Heart left ventricle (tissue), 16 donors: ENCODE measurements at regions of chr10 and their contacts with region 1.

Region 1: DNA sequence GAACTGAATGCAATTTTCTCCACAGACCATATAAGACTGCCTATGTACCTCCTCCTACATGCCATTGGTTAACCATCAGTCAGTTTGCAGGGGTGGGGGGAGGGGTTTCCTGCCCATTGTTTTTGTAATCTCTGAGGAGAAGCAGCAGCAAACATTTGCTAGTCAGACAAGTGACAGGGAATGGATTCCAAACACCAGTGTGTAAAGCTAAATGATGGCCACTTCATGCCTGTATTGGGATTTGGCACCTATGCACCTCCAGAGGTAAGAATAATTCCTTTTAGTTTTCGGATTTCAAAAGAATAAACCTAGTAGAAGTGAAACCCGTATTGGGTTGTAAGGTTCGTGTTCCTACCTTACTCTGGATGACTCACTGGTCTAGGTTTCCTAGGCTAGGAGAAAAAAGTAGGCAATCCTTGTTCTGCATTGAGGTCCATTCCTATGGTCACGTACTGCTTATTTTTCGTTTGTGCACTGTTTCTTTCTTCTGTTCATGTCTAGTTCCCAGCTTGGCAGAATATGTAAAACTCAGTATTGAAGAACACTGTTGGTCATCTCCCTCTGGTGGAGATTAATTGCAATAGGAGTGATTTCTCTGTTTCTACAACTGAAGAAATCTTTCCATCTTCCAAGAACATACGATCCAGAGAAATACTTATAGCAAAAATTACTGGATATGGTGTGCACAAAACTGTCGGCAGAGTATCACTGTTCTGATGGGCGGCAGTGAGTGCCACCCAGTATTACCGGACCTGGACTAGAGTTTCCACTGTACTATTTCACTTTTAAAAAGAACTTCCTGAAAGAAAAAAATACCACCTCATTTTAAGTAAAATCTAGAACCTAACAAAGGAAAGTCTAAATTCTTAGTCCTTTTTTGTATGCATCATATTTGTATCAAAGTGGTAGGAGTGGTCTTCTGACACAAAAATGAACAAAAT is at the start of gene AKR1C3:
- DNase-seq: peak in 1 of 5 donors; percentile 24
- ATAC-seq: peak; percentile 68 to 89 (median 83)
- H3K4me3 ChIP-seq: peak within 1 kb of the TSS; percentile 35 to 68 (median 62)
- H3K27ac ChIP-seq: peak within 1 kb of the TSS in 11 of 12 donors; percentile 49 to 85 (median 70)
- H3K4me1 ChIP-seq: peaks cover 0 to 14% (median 2%) of the 10 kb centered on the region in 12 donors
- H3K27me3 ChIP-seq: no peaks in the 10 kb centered on the region
- CTCF ChIP-seq: peak; percentile 54 to 81 (median 74)
- POLR2A ChIP-seq: peak in 1 of 2 donors; percentile 40
- total RNA-seq, gene AKR1C3: 13.9 to 25.1 (median 21.1) TPM

Region 2: DNA sequence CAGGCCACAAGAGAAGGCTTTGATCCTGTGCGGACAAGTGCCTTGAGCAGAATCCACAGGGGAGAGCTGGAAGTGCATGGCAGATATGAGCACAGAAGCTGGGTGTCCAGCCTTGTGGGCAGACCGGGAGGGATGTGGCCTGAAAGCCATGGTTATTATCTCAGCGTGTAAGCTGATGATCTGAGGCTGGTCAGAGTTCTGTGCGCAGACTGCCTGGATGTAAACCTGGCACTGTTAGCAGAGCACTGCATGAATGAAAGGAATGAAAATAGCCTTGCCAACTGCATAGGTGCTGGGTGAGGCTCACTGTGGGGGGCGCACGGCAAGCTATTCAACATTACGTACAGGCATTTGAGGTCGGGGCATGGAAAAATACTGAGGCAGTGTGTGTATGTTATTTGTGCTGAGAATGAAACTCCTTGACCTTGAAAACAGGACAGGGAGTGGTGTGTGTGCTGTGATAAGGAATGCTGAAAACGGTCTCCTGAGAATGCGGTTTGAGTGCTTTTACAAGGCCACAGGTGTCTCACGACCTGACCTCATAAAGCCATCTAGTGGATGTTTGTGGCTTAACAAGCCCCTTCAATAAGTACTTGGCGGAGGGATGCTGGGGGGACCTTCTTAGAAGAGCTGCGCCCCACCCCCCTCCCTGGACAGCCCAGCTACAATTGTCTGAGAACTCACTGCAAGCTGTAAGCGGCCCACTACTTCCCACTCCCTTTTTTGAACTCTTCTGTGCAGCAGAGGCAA is 112.6 kb before region 1 on chr10:
- intact Hi-C with region 1: loop called in 1 of 10 experiments (anchors 10 kb)
- DNase-seq: peak in 2 of 5 donors; percentile 17 to 31
- ATAC-seq: peak in 3 of 4 donors; percentile 52 to 68 (median 53)
- H3K4me3 ChIP-seq: no peak overlapping the region
- H3K27ac ChIP-seq: peak overlapping the region in 5 of 12 donors; percentile 7 to 52 (median 50)
- H3K4me1 ChIP-seq: peaks cover 0 to 18% (median 6%) of the 10 kb centered on the region in 12 donors
- H3K27me3 ChIP-seq: no peaks in the 10 kb centered on the region
- CTCF ChIP-seq: peak; percentile 21 to 58 (median 51)
- POLR2A ChIP-seq: no peak

Region 3: DNA sequence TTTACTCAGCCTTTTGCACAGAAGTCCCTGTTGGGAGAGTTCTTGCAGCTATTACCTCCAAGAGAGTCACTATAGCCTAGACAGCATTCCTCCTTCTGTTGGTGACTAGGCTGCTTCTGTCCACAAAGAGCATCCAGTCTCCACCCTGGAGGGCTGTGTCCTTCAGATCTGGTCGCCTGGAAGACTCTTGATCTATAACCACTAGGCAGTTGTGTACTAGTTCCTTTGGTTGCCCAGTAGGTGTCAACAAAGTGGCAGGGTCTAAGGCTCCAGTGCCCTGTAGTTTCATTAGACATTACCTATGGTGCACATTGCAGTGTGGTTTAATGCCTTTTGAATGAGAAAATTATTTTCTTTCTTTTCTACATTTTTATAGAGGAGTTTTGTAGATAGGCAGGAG is 79.6 kb before region 1 on chr10:
- intact Hi-C with region 1: loop called in 6 of 10 experiments (anchors 5 to 10 kb)
- DNase-seq: no peak
- ATAC-seq: no peak
- H3K4me3 ChIP-seq: no peak overlapping the region
- H3K27ac ChIP-seq: no peak overlapping the region
- H3K4me1 ChIP-seq: peaks cover 0 to 28% (median 13%) of the 10 kb centered on the region in 12 donors
- H3K27me3 ChIP-seq: no peaks in the 10 kb centered on the region
- CTCF ChIP-seq: peak in 2 of 12 donors; percentile 6 to 11
- POLR2A ChIP-seq: no peak

Region 4: DNA sequence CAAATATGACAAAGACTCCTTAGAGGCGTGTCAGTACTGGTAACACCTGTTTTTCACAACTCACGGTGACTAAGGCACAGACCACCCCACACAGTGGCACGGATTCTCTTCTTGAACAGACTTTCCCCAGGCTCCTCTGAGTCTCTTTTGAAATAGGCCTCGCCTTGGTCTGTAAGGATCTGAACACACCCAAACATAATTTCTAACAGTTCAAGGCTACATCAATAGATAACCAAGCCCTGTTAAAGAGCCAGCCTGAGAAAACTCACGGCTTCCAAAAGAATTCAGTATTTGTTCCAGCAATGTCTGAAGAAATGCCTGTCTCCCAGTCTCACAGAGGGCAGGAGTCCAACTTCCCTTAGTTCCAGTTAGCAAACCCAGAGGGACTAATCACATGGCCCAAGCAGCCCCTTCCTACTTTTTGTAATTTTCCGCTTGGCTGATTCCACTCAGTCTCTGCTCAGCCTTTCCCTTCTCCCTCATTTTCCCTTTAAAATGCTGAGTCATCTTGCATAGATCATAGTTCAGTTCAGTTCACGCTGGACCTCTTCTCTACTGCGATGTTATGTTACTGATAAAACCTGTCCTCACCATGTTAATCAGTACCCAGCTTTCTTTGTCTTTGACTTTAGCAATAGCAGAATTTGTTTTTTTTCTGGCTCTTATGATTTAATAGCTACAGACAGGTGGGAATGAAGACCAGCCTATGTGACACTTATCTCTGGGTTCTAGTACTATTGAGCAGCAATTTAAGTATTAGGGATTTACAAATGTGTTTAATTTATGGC is 22.9 kb before region 1 on chr10:
- intact Hi-C with region 1: loop called in 1 of 10 experiments (anchors 1 kb)
- DNase-seq: peak in 4 of 5 donors; percentile 64 to 87 (median 80)
- ATAC-seq: peak; percentile 91 to 97 (median 94)
- H3K4me3 ChIP-seq: peak overlapping the region in 4 of 12 donors; percentile 6 to 36 (median 18)
- H3K27ac ChIP-seq: peak overlapping the region; percentile 76 to 91 (median 86)
- H3K4me1 ChIP-seq: peaks cover 0 to 36% (median 20%) of the 10 kb centered on the region in 12 donors
- H3K27me3 ChIP-seq: no peaks in the 10 kb centered on the region
- CTCF ChIP-seq: no peak
- POLR2A ChIP-seq: peak in 1 of 2 donors; percentile 41

Region 5: DNA sequence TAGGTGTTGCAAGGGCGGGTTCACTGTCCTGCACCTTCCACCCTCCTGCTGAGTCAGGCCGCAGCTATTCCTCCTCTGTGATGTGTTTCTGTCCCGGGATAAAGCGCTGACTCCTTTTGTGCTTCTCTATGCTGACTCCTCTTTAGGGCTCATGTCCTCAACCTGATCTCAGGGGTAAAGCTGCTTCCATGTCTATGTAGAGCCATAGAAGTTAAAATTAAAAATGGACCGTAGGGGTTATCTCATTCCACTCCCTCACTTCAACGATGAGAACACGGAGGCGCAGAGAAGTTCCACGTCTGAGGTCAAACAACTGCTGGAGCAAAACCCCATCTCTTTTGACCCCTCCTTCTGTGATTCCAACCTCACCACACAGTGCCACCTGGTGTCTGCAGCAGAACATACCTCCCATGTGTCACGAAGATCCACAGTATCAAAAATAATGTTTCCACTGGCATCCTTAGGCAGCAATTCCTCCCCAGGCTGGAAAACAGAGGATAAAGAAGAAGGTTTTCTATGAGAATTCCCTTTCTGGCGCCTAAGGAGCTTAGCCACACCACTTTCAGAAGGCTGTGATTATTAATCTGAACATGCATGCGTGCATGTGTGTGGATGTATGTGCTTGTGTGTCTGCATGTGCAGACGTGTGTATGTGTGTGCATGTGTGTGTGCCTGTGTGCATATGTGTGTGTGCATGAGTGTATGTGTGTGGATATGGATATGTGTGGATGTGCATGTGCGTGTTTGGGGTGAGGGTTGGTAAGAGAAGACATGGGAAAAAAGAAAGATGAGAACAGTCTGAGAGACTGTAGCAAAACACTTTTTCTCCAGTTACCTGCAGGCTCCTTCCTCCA is 189.0 kb after region 1 on chr10:
- intact Hi-C with region 1: loop called in 4 of 10 experiments (anchors 2 to 10 kb)
- DNase-seq: peak in 4 of 5 donors; percentile 44 to 63 (median 58)
- ATAC-seq: peak in 3 of 4 donors; percentile 88 to 95 (median 94)
- H3K4me3 ChIP-seq: no peak overlapping the region
- H3K27ac ChIP-seq: peak overlapping the region in 1 of 12 donors; percentile 63
- H3K4me1 ChIP-seq: peaks cover 0 to 22% (median 0%) of the 10 kb centered on the region in 12 donors
- H3K27me3 ChIP-seq: peaks cover 0 to 4% (median 0%) of the 10 kb centered on the region in 9 donors
- CTCF ChIP-seq: peak; percentile 54 to 76 (median 62)
- POLR2A ChIP-seq: no peak

Region 6: GRCh38 chr10:5293691-5294550 is 199.4 kb after region 1 on chr10:
- intact Hi-C with region 1: loop called in 4 of 10 experiments (anchors 10 kb)
- DNase-seq: peak; percentile 34 to 84 (median 42)
- ATAC-seq: peak in 3 of 4 donors; percentile 3 to 47 (median 14)
- H3K4me3 ChIP-seq: peak overlapping the region in 1 of 12 donors; percentile 19
- H3K27ac ChIP-seq: peak overlapping the region in 10 of 12 donors; percentile 18 to 85 (median 58)
- H3K4me1 ChIP-seq: peaks cover 0 to 69% (median 20%) of the 10 kb centered on the region in 12 donors
- H3K27me3 ChIP-seq: no peaks in the 10 kb centered on the region
- CTCF ChIP-seq: peak in 10 of 12 donors; percentile 20 to 51 (median 34)
- POLR2A ChIP-seq: no peak

Region 7: DNA sequence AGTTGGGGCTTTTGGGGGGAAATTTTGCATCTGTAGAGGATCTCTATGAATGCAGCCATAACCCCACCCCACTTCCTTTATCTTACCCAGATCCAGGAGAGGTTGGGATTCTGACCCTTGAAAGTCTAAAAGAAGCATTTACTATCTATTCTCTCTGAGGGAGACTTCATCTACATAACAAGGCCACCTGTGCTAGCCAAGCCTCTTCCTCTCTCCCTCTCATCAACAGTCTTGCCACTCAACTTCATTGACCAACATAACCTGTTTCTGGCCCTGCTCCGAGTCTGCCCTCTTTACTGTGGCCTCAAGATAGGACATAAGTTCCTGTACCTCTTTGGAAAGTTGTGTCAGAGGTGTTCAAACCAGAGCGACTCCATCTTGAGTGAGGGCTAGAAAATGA is 290.7 kb after region 1 on chr10:
- intact Hi-C with region 1: loop called in 2 of 10 experiments (anchors 5 to 10 kb)
- DNase-seq: no peak
- ATAC-seq: no peak
- H3K4me3 ChIP-seq: no peak overlapping the region
- H3K27ac ChIP-seq: no peak overlapping the region
- H3K4me1 ChIP-seq: no peaks in the 10 kb centered on the region
- H3K27me3 ChIP-seq: no peaks in the 10 kb centered on the region
- CTCF ChIP-seq: no peak
- POLR2A ChIP-seq: no peak